Naive thymus-derived CD4-positive, alpha-beta T cell (primary cell): ENCODE measurements at regions of chr22 and their contacts with region 1.

Region 1: GRCh38 chr22:49960159-49961004 is at the start of gene PIM3:
- DNase-seq: peak; percentile 90 to 95 (median 94)
- ATAC-seq: peak; percentile 80
- H3K4me3 ChIP-seq: peak within 1 kb of the TSS; percentile 86
- H3K4me3 Mint-ChIP-seq: peak within 1 kb of the TSS; percentile 82 to 95 (median 90)
- H3K27ac ChIP-seq: peak within 1 kb of the TSS; percentile 90
- H3K27ac Mint-ChIP-seq: peak within 1 kb of the TSS; percentile 76 to 96 (median 89)
- H3K4me1 ChIP-seq: peaks cover 20 to 26% of the 10 kb centered on the region in 2 donors
- H3K4me1 Mint-ChIP-seq: peaks cover 7 to 30% (median 15%) of the 10 kb centered on the region in 7 donors
- H3K27me3 ChIP-seq: no peaks in the 10 kb centered on the region
- H3K27me3 Mint-ChIP-seq: no peaks in the 10 kb centered on the region
- total RNA-seq, gene PIM3: 44.4 to 164 (median 78.3) TPM

Region 2: GRCh38 chr22:49827853-49828598 is 132.4 kb before region 1 on chr22 and contains the start of gene BRD1:
- CTCF ChIA-PET with region 1: no interaction called
- POLR2A ChIA-PET with region 1: no interaction called
- intact Hi-C with region 1: loop called in 1 of 2 experiments (anchors 1 kb)
- DNase-seq: peak in 8 of 9 donors; percentile 35 to 71 (median 52)
- ATAC-seq: peak; percentile 76
- H3K4me3 ChIP-seq: peak within 1 kb of the TSS; percentile 75
- H3K4me3 Mint-ChIP-seq: peak within 1 kb of the TSS; percentile 90 to 93 (median 92)
- H3K27ac ChIP-seq: peak within 1 kb of the TSS; percentile 95
- H3K27ac Mint-ChIP-seq: peak within 1 kb of the TSS; percentile 87 to 96 (median 94)
- H3K4me1 ChIP-seq: peaks cover 28 to 36% of the 10 kb centered on the region in 2 donors
- H3K4me1 Mint-ChIP-seq: peaks cover 33 to 63% (median 50%) of the 10 kb centered on the region in 7 donors
- H3K27me3 ChIP-seq: no peaks in the 10 kb centered on the region
- H3K27me3 Mint-ChIP-seq: peaks cover 0 to 12% (median 0%) of the 10 kb centered on the region in 5 donors
- total RNA-seq, gene BRD1: 50.0 to 130 (median 87.7) TPM

Region 3: GRCh38 chr22:49917974-49918910 is 42.1 kb before region 1 on chr22 and contains the starts of genes ALG12 and CRELD2:
- CTCF ChIA-PET with region 1: no interaction called
- POLR2A ChIA-PET with region 1: interaction called, 4 read pairs
- intact Hi-C with region 1: loop called (anchors 1 kb)
- DNase-seq: peak; percentile 92 to 98 (median 95)
- ATAC-seq: peak; percentile 99
- H3K4me3 ChIP-seq: peak within 1 kb of the TSS; percentile 96
- H3K4me3 Mint-ChIP-seq: peak within 1 kb of the TSS; percentile 84 to 97 (median 88)
- H3K27ac ChIP-seq: peak within 1 kb of the TSS; percentile 97
- H3K27ac Mint-ChIP-seq: peak within 1 kb of the TSS; percentile 73 to 95 (median 91)
- H3K4me1 ChIP-seq: peaks cover 11 to 20% of the 10 kb centered on the region in 2 donors
- H3K4me1 Mint-ChIP-seq: peaks cover 0 to 36% (median 26%) of the 10 kb centered on the region in 7 donors
- H3K27me3 ChIP-seq: no peaks in the 10 kb centered on the region
- H3K27me3 Mint-ChIP-seq: no peaks in the 10 kb centered on the region
- total RNA-seq, gene ALG12: 16.2 to 22.4 (median 19.5) TPM
- total RNA-seq, gene CRELD2: 19.7 to 80.9 (median 28.5) TPM

Region 4: DNA sequence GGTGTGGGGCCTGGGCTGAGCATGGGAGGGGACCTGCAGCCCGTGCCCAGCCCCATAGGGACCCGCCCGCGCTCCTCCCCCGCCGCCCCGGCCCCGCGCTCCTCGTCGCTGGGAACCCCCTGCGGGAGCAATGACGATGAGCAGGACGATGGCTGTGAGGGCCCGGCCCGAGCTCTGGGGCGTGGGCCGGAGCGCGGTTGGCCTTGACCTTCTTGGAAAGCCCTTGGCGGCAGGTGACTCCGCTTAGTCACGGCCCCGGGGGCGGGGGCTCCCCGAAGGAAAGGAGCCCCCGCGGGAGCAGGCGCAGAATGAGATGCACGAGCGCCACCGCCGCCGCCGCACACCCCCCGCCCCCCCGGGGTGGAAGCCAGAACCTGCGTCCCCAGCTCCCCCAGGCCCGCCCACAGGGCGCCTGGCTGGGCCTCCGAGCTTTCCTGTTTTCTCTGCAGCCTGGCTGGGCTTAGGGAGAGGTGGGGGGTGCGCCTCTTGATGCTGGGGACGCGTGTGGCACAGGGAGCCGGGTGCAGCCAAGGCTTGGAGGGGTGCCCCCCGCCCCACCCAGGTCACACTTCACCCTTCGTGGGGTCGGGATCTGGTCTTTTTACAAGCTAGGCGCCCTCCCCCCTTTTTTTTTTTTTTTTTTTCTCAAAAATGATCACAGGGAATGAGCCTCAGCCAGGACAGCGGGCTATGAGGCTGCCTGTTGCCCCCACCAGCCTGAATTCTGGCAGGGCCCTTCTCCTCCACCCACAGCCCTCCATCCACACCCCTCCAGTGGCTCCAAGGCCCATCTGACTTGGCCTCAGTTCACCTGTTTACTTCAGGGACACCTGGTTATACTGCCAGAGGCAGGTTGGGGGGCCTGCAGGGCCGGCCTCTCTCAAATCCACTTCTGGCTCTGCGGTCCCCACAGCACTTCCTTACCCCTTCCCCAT is 24.1 kb before region 1 on chr22:
- CTCF ChIA-PET with region 1: interaction called, 3 read pairs
- POLR2A ChIA-PET with region 1: interaction called, 48 read pairs
- intact Hi-C with region 1: loop called (anchors 1 kb)
- DNase-seq: peak; percentile 85 to 98 (median 91)
- ATAC-seq: peak; percentile 84
- H3K4me3 ChIP-seq: peak overlapping the region; percentile 41
- H3K4me3 Mint-ChIP-seq: peak overlapping the region; percentile 56 to 76 (median 73)
- H3K27ac ChIP-seq: peak overlapping the region; percentile 99
- H3K27ac Mint-ChIP-seq: peak overlapping the region; percentile 78 to 94 (median 91)
- H3K4me1 ChIP-seq: peaks cover 12 to 18% of the 10 kb centered on the region in 2 donors
- H3K4me1 Mint-ChIP-seq: peaks cover 6 to 31% (median 23%) of the 10 kb centered on the region in 7 donors
- H3K27me3 ChIP-seq: no peaks in the 10 kb centered on the region
- H3K27me3 Mint-ChIP-seq: no peaks in the 10 kb centered on the region

Region 5: DNA sequence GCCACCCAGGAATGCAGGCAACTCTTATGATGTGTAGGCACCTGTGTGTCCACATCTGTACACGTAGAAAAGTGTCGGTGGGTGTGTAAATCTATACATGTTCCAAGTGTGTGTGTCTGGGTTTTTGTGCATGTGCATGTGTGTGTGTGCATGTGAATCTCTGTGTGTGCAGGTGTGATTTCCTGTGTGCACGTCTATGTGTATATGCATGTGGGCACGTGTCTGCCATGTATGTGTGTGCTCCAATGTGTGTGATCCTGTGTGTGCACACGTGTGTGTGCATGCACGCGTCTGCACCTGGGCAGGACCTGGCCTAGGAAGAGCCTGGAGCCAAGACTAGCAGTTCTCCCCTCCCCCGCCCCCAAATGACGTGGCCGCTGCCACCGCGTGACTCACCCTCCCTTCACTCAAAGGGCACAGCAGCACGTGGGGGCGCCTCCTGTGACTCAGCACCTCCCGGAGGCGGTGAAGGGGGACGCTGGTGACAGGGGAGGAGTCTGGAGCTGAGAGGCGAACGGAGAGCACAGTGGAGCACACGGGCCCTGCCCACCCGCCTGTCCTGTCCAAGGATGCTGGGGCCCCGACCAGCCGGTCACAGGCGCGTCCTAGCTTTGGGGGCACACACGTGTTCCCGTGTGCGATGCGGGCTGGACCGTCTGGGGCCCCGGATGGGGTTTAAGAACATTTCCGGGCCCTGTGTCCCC is 10.3 kb after region 1 on chr22:
- CTCF ChIA-PET with region 1: no interaction called
- POLR2A ChIA-PET with region 1: interaction called, 33 read pairs
- intact Hi-C with region 1: no loop called
- DNase-seq: peak; percentile 73 to 96 (median 81)
- ATAC-seq: peak; percentile 87
- H3K4me3 ChIP-seq: peak overlapping the region; percentile 53
- H3K4me3 Mint-ChIP-seq: peak overlapping the region; percentile 81 to 90 (median 84)
- H3K27ac ChIP-seq: peak overlapping the region; percentile 30
- H3K27ac Mint-ChIP-seq: peak overlapping the region; percentile 83 to 96 (median 92)
- H3K4me1 ChIP-seq: peaks cover 15 to 24% of the 10 kb centered on the region in 2 donors
- H3K4me1 Mint-ChIP-seq: peaks cover 12 to 38% (median 21%) of the 10 kb centered on the region in 7 donors
- H3K27me3 ChIP-seq: no peaks in the 10 kb centered on the region
- H3K27me3 Mint-ChIP-seq: no peaks in the 10 kb centered on the region